Activated B cell treated with CpG ODN at 0.5 μM for 24 hours (primary cell): ENCODE measurements at regions of chr16 and their contacts with region 1.

Region 1: DNA sequence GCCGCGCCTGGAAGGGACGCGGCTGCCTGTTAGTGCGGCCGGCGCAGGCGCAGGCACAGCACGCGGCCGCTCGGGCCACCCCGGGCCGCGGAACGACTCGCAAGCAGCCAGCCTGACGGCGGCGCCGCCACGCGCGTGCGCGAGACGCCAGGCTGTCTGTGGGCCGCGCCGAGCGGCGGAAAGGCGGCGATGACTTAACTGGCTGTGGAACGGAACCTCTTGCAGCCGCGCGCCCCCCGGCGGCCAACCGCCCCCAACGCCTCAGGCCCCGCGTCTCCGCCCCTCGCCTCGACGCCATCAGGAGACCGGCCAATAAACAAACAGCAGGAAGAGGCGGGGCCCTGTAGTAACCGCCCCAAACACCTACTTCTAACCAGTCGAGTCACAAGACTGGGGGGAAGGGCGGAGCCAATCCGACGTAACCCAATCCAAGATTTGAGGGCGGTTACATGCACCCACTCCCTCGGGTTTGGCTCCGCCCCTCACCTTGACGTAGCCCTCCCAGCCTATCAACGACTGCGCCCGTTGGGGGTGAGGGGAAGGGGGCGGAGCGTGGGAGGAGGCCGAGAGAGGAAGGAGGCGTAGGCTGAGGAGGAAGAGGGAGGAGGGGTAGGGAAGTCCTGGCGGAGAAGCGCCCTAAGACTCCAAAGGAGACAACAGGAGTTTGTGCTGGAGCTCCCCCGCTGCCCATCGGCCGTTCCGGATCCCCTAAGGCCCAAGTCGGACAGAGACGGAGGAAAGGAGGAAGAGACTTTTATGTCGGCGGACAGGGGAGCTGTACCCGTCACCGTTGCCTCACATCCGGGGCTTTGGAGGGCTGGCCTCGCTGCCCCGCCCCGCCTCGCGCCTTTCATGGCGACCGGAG is at the start of gene FBRS:
- DNase-seq: peak; percentile 99
- ATAC-seq: peak; percentile 73
- H3K4me3 Mint-ChIP-seq: peak within 1 kb of the TSS; percentile 98
- H3K27ac Mint-ChIP-seq: peak within 1 kb of the TSS; percentile 100
- H3K4me1 Mint-ChIP-seq: peaks cover 37% of the 10 kb centered on the region
- H3K27me3 Mint-ChIP-seq: no peaks in the 10 kb centered on the region
- CTCF ChIP-seq: no peak
- total RNA-seq, gene FBRS: 166 and 204 TPM in 2 replicates

Region 2: GRCh38 chr16:29862884-29863668 is 795.0 kb before region 1 on chr16 and contains the start of gene CDIPT:
- CTCF ChIA-PET with region 1: no interaction called
- POLR2A ChIA-PET with region 1: no interaction called
- intact Hi-C with region 1: loop called (anchors 1 kb)
- DNase-seq: peak; percentile 79
- ATAC-seq: peak; percentile 98
- H3K4me3 Mint-ChIP-seq: peak within 1 kb of the TSS; percentile 94
- H3K27ac Mint-ChIP-seq: peak within 1 kb of the TSS; percentile 100
- H3K4me1 Mint-ChIP-seq: peaks cover 24% of the 10 kb centered on the region
- H3K27me3 Mint-ChIP-seq: peaks cover 6% of the 10 kb centered on the region
- CTCF ChIP-seq: no peak
- total RNA-seq, gene CDIPT: 28.7 and 29.8 TPM in 2 replicates

Region 3: GRCh38 chr16:30378236-30379204 is 279.6 kb before region 1 on chr16:
- CTCF ChIA-PET with region 1: no interaction called
- POLR2A ChIA-PET with region 1: interaction called, 10 read pairs
- intact Hi-C with region 1: loop called (anchors 1 kb)
- DNase-seq: peak; percentile 99
- ATAC-seq: peak; percentile 88
- H3K4me3 Mint-ChIP-seq: peak overlapping the region; percentile 92
- H3K27ac Mint-ChIP-seq: peak overlapping the region; percentile 100
- H3K4me1 Mint-ChIP-seq: peaks cover 62% of the 10 kb centered on the region
- H3K27me3 Mint-ChIP-seq: no peaks in the 10 kb centered on the region
- CTCF ChIP-seq: no peak

Region 4: DNA sequence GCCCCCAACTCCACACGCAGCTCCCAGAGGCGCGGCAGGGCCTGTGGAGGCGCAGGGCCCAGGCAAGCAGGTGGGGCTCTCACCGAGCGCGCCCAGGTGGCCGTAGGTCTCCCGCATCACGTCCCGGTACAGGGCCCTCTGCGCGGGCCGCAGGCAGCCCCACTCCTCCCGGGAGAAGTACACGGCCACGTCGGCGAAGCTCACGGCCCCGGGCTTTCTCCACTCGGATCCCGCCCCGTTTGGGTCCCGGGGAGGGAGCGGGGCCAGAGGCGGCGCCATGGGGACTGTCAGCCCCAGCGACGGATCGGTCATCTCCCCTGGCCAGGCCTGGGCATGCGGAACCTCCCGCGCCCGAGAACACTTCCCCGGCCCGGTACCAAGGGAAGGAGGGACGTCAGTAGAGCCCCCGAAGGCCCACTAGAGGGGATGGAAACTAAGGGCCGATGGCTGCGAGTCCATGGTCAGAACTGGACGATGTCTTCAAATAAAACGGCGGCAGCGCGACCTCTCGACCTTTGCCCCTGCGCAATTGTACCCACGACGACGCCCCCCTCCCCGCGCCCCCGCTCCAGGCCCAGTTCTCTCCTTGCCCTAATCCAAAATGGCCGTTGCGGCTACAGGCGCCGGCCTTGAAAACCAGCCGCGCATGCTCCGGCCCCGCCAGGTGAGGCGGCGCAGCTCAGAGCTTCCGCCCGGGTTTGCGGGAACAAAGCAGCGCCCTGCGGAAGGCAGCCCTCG is 123.6 kb before region 1 on chr16 and contains the start of gene ZNF747:
- CTCF ChIA-PET with region 1: interaction called, 3 read pairs
- POLR2A ChIA-PET with region 1: interaction called, 18 read pairs
- intact Hi-C with region 1: no loop called
- DNase-seq: peak; percentile 85
- ATAC-seq: peak; percentile 83
- H3K4me3 Mint-ChIP-seq: peak within 1 kb of the TSS; percentile 96
- H3K27ac Mint-ChIP-seq: peak within 1 kb of the TSS; percentile 97
- H3K4me1 Mint-ChIP-seq: peaks cover 23% of the 10 kb centered on the region
- H3K27me3 Mint-ChIP-seq: no peaks in the 10 kb centered on the region
- CTCF ChIP-seq: no peak
- total RNA-seq, gene ZNF747: 16.3 and 21.6 TPM in 2 replicates

Region 5: DNA sequence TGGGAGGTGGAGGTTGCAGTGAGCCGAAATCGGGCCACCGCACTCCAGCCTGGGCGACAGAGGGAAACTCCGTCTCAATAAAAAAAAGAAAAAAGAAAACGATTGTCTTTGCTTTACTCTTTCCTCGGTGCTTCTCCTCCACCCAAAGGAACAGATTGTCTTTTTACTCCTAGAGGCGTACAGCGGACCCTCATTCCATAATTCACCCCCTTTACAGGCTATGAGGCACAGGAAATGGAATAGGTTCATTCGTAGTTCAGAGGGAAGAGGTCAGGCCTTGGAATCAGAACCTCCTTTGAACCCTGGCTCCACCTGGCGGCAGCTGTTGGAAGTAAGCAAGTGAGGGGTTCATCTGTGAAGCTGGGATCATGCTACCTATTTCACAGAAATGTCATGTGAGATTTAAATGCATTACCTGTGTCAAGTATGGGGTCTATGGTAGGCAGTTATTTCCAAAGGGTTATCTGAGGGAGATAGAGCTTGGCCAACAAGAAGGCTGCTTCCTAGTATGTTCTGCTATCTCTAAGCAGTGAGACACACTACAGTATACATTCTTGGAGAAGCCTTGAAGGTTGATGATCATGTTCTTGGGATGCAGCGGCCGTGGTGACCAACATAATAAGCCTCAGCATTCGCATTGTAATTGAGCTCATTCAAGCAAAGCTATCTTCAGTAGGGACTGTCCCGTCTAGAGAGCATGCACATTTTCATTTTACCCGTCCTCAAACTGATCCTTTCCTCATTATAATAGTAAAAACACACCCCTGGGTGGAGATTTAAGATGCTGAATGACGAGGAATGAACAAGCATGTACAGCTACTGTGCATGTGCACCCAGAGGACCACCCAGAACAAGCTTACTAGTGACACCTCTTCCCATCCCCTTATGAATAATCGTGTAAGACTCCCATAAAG is 29.2 kb before region 1 on chr16:
- CTCF ChIA-PET with region 1: interaction called, 4 read pairs
- POLR2A ChIA-PET with region 1: interaction called, 65 read pairs
- intact Hi-C with region 1: loop called (anchors 1 kb)
- DNase-seq: peak; percentile 84
- ATAC-seq: peak; percentile 93
- H3K4me3 Mint-ChIP-seq: peak overlapping the region; percentile 69
- H3K27ac Mint-ChIP-seq: peak overlapping the region; percentile 76
- H3K4me1 Mint-ChIP-seq: peaks cover 6% of the 10 kb centered on the region
- H3K27me3 Mint-ChIP-seq: no peaks in the 10 kb centered on the region
- CTCF ChIP-seq: peak; percentile 70

Region 6: GRCh38 chr16:30747799-30748634 is 89.9 kb after region 1 on chr16 and contains the start of gene PHKG2:
- CTCF ChIA-PET with region 1: no interaction called
- POLR2A ChIA-PET with region 1: interaction called, 19 read pairs
- intact Hi-C with region 1: loop called (anchors 1 kb)
- DNase-seq: peak; percentile 90
- ATAC-seq: peak; percentile 98
- H3K4me3 Mint-ChIP-seq: peak within 1 kb of the TSS; percentile 91
- H3K27ac Mint-ChIP-seq: peak within 1 kb of the TSS; percentile 87
- H3K4me1 Mint-ChIP-seq: peaks cover 24% of the 10 kb centered on the region
- H3K27me3 Mint-ChIP-seq: no peaks in the 10 kb centered on the region
- CTCF ChIP-seq: no peak
- total RNA-seq, gene PHKG2: 45.3 and 51.4 TPM in 2 replicates

Region 7: GRCh38 chr16:31073968-31074813 is 416.1 kb after region 1 on chr16 and contains the starts of genes ZNF646 and ZNF668:
- CTCF ChIA-PET with region 1: no interaction called
- POLR2A ChIA-PET with region 1: interaction called, 10 read pairs
- intact Hi-C with region 1: no loop called
- DNase-seq: peak; percentile 86
- ATAC-seq: peak; percentile 83
- H3K4me3 Mint-ChIP-seq: peak within 1 kb of the TSS; percentile 96
- H3K27ac Mint-ChIP-seq: peak within 1 kb of the TSS; percentile 91
- H3K4me1 Mint-ChIP-seq: peaks cover 34% of the 10 kb centered on the region
- H3K27me3 Mint-ChIP-seq: no peaks in the 10 kb centered on the region
- CTCF ChIP-seq: no peak
- total RNA-seq, gene ZNF646: 32.4 and 32.5 TPM in 2 replicates
- total RNA-seq, gene ZNF668: 8.3 and 10.1 TPM in 2 replicates